MCF 10A (cell line): ENCODE measurements at regions of chr3 and their contacts with region 1.

Region 1: DNA sequence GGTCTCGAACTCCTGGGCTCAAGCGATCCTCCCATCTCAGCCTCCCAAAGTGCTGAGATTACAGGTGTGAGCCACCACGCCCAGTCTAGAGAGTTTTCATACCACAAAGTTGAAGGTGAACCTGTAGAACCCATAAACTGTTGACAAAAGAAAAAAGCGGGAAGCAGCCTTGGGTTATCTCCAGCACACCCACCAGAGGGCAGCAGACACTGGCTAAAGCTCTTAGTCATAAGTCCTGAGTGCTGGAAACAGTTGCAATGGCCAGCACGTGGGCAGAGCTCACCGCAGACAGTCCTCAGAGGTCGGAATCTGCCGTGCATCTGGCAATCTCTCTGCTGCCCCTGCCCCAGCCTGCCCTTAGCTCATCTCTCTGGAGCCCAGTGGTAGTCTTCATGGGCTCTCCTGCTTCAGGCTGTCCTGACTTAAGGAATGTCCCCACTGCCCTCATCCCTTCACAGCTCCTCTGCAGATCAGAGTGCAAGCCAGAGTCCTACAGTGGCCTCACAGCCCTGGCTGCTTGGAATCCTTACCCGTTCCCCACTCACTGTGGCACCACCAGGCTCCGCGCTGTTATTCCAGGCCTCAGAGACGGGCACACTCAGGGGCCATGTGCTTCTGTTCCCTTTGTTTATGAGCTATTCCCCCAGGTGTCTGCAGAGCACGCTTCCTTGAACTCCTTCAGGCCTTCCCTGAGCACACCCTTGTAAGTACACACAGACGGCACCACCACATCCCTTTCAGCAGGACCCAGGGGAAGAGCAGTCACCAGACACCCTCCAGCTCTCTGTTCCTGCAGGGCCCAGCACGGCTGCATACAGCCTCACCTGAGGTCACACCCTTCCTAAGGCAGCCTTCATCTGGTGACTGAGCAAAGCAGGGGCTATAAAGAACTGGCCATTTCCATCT is 8.8 kb upstream of the ELP6 start:
- DNase-seq: peak; percentile 87
- H3K4me3 Mint-ChIP-seq: no peak overlapping the region
- H3K27ac Mint-ChIP-seq: no peak overlapping the region
- H3K4me1 Mint-ChIP-seq: no peaks in the 10 kb centered on the region
- H3K27me3 Mint-ChIP-seq: no peaks in the 10 kb centered on the region
- CTCF ChIP-seq: peak; percentile 87

Region 2: DNA sequence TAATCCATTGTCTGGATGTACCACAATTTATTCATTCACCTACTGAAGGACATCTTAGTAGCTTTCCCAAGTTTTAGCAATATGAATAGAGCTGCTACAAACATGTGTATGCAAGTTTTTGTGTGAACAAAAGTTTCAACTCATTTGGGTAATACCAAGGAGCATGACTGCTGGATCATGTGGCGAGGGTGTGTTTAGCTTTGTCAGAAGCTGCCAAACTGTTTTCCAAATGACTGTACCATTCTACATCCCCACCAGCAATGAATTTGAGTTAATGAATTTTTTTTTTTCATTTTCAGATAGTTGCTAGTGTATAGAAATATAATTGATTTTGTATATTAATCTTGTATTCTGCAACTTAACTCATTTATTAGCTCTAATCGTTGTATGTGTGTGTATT is 11.1 kb after region 1 on chr3:
- CTCF ChIA-PET with region 1: interaction called, 28 read pairs
- POLR2A ChIA-PET with region 1: interaction called, 4 read pairs
- intact Hi-C with region 1: no loop called
- DNase-seq: no peak
- H3K4me3 Mint-ChIP-seq: no peak overlapping the region
- H3K27ac Mint-ChIP-seq: no peak overlapping the region
- H3K4me1 Mint-ChIP-seq: peaks cover 10% of the 10 kb centered on the region
- H3K27me3 Mint-ChIP-seq: peaks cover 8% of the 10 kb centered on the region
- CTCF ChIP-seq: no peak

Region 3: DNA sequence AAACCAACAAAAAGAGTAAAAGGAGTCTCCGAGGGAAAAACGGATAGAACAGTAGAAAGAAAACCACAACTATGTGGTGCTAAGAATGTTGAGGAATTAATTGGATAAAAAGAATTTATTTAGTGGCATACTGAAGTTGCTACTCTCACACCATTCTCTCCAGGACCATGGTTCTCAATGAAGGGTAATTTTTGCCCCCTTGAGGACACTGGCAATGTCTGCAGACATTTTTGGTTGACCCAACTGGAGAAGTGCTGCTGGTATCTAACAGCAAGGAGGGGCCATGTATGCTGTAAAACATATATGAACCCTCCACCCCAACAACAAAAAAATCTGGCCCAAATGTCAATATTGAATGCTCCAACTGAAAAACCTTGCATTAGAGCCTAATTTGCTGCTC is 142.2 kb after region 1 on chr3:
- CTCF ChIA-PET with region 1: interaction called, 4 read pairs
- POLR2A ChIA-PET with region 1: interaction called, 7 read pairs
- intact Hi-C with region 1: loop called (anchors 5 kb)
- DNase-seq: peak; percentile 35
- H3K4me3 Mint-ChIP-seq: no peak overlapping the region
- H3K27ac Mint-ChIP-seq: no peak overlapping the region
- H3K4me1 Mint-ChIP-seq: peaks cover 17% of the 10 kb centered on the region
- H3K27me3 Mint-ChIP-seq: no peaks in the 10 kb centered on the region
- CTCF ChIP-seq: peak; percentile 17

Region 4: GRCh38 chr3:47791193-47791855 is 269.0 kb after region 1 on chr3:
- CTCF ChIA-PET with region 1: interaction called, 43 read pairs
- POLR2A ChIA-PET with region 1: interaction called, 4 read pairs
- intact Hi-C with region 1: loop called (anchors 1 kb)
- DNase-seq: no peak
- H3K4me3 Mint-ChIP-seq: no peak overlapping the region
- H3K27ac Mint-ChIP-seq: no peak overlapping the region
- H3K4me1 Mint-ChIP-seq: no peaks in the 10 kb centered on the region
- H3K27me3 Mint-ChIP-seq: no peaks in the 10 kb centered on the region
- CTCF ChIP-seq: no peak

Region 5: DNA sequence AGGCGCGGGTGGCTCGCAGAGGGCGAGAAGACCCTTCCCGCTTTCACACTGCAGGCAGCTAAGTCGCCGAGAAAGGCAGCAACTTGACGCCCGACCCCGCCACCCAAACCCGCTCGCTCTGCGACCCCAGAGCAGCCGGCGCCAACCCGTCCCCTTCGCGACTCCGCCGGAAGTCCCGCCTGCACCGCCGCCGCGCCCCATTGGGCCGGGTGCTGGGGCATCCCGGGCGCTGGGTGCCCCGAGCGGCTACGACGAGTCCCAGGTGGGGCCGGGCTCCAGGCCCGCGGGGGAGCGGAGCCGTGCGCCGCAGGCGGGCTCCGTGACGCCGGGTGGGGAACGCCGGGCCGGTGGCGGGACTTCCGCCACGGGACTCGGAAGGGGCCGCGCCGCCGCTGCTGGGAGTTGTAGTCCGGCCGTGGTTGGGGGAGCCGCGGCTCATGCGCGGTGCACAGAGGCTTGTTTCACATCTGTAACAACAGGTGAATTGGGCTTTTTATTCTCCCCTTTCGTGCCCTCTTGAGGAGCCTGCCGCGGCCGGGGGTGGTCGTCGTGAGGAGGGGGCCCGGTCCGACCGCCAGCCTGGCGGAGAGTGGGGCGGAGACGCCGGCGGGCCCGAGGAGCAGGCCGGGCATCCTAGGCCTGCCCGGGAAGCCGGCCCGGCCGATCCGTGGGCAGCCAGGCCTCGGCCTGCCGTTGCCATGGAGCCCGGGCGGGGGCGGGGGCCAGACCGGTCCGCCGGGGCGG is 280.6 kb after region 1 on chr3 and contains the start of gene DHX30:
- CTCF ChIA-PET with region 1: interaction called, 5 read pairs
- POLR2A ChIA-PET with region 1: interaction called, 3 read pairs
- intact Hi-C with region 1: loop called (anchors 5 kb)
- DNase-seq: peak; percentile 80
- H3K4me3 Mint-ChIP-seq: peak within 1 kb of the TSS; percentile 94
- H3K27ac Mint-ChIP-seq: peak within 1 kb of the TSS; percentile 97
- H3K4me1 Mint-ChIP-seq: peaks cover 12% of the 10 kb centered on the region
- H3K27me3 Mint-ChIP-seq: no peaks in the 10 kb centered on the region
- CTCF ChIP-seq: no peak
- total RNA-seq, gene DHX30: 80.5 and 86.2 TPM in 2 replicates

Region 6: GRCh38 chr3:48157950-48158376 is 635.6 kb after region 1 on chr3:
- CTCF ChIA-PET with region 1: no interaction called
- POLR2A ChIA-PET with region 1: no interaction called
- intact Hi-C with region 1: loop called (anchors 5 kb)
- DNase-seq: peak; percentile 35
- H3K4me3 Mint-ChIP-seq: no peak overlapping the region
- H3K27ac Mint-ChIP-seq: no peak overlapping the region
- H3K4me1 Mint-ChIP-seq: peaks cover 17% of the 10 kb centered on the region
- H3K27me3 Mint-ChIP-seq: no peaks in the 10 kb centered on the region
- CTCF ChIP-seq: peak; percentile 59